A549 (cell line): ENCODE measurements at regions of chr16 and their contacts with region 1.

Region 1: GRCh38 chr16:11396241-11397048 is 51.2 kb downstream of the RMI2 start:
- DNase-seq: peak; percentile 67 to 94
- ATAC-seq: peak; percentile 74 to 93
- H3K4me3 ChIP-seq: no peak overlapping the region
- H3K27ac ChIP-seq: peak overlapping the region; percentile 73 to 81
- H3K4me1 ChIP-seq: peaks cover 4% of the 10 kb centered on the region; the same call in 2 of the 3 replicates
- CTCF ChIP-seq: peak; percentile 93
- EP300 ChIP-seq: no peak
- POLR2A ChIP-seq: no peak
- RAD21 ChIP-seq: peak; percentile 99

Region 2: GRCh38 chr16:11201498-11202259 is 194.8 kb before region 1 on chr16:
- CTCF ChIA-PET with region 1: no interaction called
- POLR2A ChIA-PET with region 1: no interaction called
- DNase-seq: peak in 1 of 2 experiments; percentile 36
- ATAC-seq: peak; percentile 49 to 58
- H3K4me3 ChIP-seq: no peak overlapping the region
- H3K27ac ChIP-seq: peak overlapping the region in 1 of 2 experiments; percentile 72; a peak in 3 of 6 replicates
- H3K4me1 ChIP-seq: peaks cover 22% of the 10 kb centered on the region
- CTCF ChIP-seq: no peak
- EP300 ChIP-seq: no peak
- POLR2A ChIP-seq: no peak
- RAD21 ChIP-seq: no peak

Region 3: DNA sequence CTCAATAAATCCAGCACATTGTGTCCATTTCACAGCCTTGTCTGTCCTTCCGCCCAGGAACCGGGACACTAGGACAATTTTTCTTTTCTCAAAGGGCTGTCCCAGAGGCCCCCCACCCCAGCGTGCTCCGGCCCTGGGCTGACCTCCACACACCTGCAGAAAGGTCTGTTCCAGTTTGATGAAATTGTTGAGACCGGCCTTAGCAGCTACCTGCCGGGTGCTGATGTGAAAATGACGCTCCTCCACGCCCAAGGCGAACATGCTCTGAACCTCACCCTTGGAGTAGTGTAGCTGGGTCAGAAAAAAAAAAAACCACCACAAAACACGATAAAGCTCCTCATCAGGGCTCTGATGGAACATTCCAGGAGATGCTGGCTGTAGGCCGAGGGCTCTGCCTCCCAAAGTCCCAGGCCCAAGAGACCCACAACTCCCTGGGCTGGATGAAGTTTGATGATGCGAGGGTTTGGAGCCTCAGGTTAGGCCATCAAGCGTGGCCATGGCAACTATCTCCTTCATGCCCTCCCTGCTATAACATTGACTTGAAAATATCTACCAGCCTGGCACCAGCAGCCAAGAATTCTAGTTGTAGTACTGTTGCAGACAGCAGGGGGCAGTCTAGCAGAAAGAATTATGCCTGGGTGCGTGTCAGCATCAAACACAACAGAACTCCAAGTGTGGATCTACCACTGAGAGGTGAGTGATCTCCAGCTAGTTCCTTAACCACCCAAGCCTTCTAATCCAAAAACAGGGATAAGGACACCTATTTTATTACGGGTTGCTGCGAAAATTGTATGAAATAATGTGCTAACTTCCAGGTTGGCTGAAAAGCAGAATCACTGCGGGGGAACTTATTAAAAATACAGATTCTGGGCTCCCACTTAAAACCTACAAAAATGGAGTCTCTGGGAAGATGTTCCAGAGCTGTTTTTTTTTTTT is 10.9 kb after region 1 on chr16:
- CTCF ChIA-PET with region 1: interaction called, 300 read pairs
- POLR2A ChIA-PET with region 1: no interaction called
- DNase-seq: peak; percentile 84 to 86
- ATAC-seq: peak; percentile 61 to 80
- H3K4me3 ChIP-seq: no peak overlapping the region
- H3K27ac ChIP-seq: peak overlapping the region; percentile 57 to 77
- H3K4me1 ChIP-seq: peaks cover 35% of the 10 kb centered on the region
- CTCF ChIP-seq: peak; percentile 79
- EP300 ChIP-seq: no peak
- POLR2A ChIP-seq: no peak
- RAD21 ChIP-seq: peak; percentile 93 to 94

Region 4: GRCh38 chr16:11474617-11475291 is 78.3 kb after region 1 on chr16:
- CTCF ChIA-PET with region 1: interaction called, 15 read pairs
- POLR2A ChIA-PET with region 1: no interaction called
- DNase-seq: peak in 1 of 2 experiments; percentile 35
- ATAC-seq: peak in 1 of 2 experiments; percentile 18; a peak in 2 of 6 replicates
- H3K4me3 ChIP-seq: no peak overlapping the region
- H3K27ac ChIP-seq: peak overlapping the region; percentile 5 to 57; a peak in 4 of 6 replicates
- H3K4me1 ChIP-seq: peaks cover 19% of the 10 kb centered on the region
- CTCF ChIP-seq: no peak
- EP300 ChIP-seq: no peak
- POLR2A ChIP-seq: no peak
- RAD21 ChIP-seq: no peak

Region 5: GRCh38 chr16:11576427-11577289 is 180.2 kb after region 1 on chr16:
- CTCF ChIA-PET with region 1: interaction called, 11 read pairs
- POLR2A ChIA-PET with region 1: no interaction called
- DNase-seq: peak in 1 of 2 experiments; percentile 66
- ATAC-seq: peak; percentile 43 to 57; a peak in 5 of 6 replicates
- H3K4me3 ChIP-seq: no peak overlapping the region
- H3K27ac ChIP-seq: peak overlapping the region; percentile 18 to 66; a peak in 4 of 6 replicates
- H3K4me1 ChIP-seq: peaks cover 71% of the 10 kb centered on the region
- CTCF ChIP-seq: no peak
- EP300 ChIP-seq: no peak
- POLR2A ChIP-seq: no peak
- RAD21 ChIP-seq: no peak

Region 6: GRCh38 chr16:11689031-11689761 is 292.8 kb after region 1 on chr16:
- CTCF ChIA-PET with region 1: interaction called, 22 read pairs
- POLR2A ChIA-PET with region 1: no interaction called
- DNase-seq: no peak
- ATAC-seq: no peak
- H3K4me3 ChIP-seq: no peak overlapping the region
- H3K27ac ChIP-seq: no peak overlapping the region
- H3K4me1 ChIP-seq: peaks cover 14% of the 10 kb centered on the region
- CTCF ChIP-seq: no peak
- EP300 ChIP-seq: no peak
- POLR2A ChIP-seq: no peak
- RAD21 ChIP-seq: no peak

Region 7: GRCh38 chr16:11797166-11797956 is 400.9 kb after region 1 on chr16 and contains the start of gene ZC3H7A:
- CTCF ChIA-PET with region 1: interaction called, 10 read pairs
- POLR2A ChIA-PET with region 1: no interaction called
- DNase-seq: peak; percentile 96 to 99
- ATAC-seq: peak; percentile 98 to 99
- H3K4me3 ChIP-seq: peak within 1 kb of the TSS; percentile 89
- H3K27ac ChIP-seq: peak within 1 kb of the TSS; percentile 97
- H3K4me1 ChIP-seq: peaks cover 44% of the 10 kb centered on the region
- CTCF ChIP-seq: peak; percentile 86
- EP300 ChIP-seq: no peak
- POLR2A ChIP-seq: peak; percentile 98
- RAD21 ChIP-seq: peak in 1 of 2 experiments; percentile 6; a peak in 1 of 5 replicates
- polyA plus RNA-seq, gene ZC3H7A: 41.5 and 55.1 TPM in 2 replicates